ENCODE measurements at regions of chr13 and their contacts with region 1.

Region 1: DNA sequence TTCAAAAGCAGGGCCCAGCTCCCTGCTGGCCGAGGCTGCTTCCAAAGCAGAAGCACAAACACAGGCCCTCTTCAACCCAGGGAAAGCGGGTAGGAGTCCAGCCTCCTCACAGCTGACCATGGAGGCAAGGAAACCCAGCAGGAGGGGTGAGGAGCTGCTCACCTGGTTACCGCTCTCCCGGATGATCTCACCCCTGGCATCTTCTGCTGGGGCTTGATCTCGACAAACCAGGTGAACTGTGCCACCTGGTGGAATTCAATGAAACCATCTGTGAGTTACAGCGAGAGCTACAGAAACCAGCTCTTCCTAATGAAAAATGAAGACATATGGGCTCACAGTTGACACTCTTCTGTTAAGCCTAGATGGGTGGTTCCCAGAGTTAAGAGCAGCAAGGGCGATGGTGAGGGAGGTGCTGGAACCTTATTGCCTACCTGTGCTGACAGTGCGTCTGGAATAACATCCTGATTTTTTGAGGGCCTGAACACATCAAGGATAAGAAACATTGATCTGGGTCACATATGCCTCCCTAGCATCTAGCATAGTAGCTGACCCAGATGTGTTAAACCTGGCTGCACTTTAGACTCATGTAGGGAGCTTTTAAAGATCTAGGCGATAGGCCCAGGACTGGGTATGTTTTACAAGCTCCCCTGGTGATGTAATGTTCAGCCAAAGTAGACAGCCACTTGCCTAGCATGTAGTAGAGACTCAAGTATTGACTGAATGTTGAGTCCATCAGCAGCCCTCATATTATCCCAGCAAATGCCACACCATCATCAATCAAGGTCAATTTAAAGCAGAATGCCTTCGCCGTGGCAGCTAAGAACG is 6.1 kb downstream of the DHRS12 start:
- DNase-seq: peak; percentile 77
- ATAC-seq: peak; percentile 76
- H3K4me3 Mint-ChIP-seq: no peak overlapping the region
- H3K27ac Mint-ChIP-seq: no peak overlapping the region
- H3K4me1 Mint-ChIP-seq: peaks cover 24% of the 10 kb centered on the region
- H3K27me3 Mint-ChIP-seq: no peaks in the 10 kb centered on the region

Region 2: GRCh38 chr13:51425410-51426042 is 372.4 kb before region 1 on chr13:
- CTCF ChIA-PET with region 1: interaction called, 94 read pairs
- POLR2A ChIA-PET with region 1: no interaction called
- DNase-seq: no peak
- ATAC-seq: no peak
- H3K4me3 Mint-ChIP-seq: no peak overlapping the region
- H3K27ac Mint-ChIP-seq: no peak overlapping the region
- H3K4me1 Mint-ChIP-seq: peaks cover 32% of the 10 kb centered on the region
- H3K27me3 Mint-ChIP-seq: no peaks in the 10 kb centered on the region

Region 3: DNA sequence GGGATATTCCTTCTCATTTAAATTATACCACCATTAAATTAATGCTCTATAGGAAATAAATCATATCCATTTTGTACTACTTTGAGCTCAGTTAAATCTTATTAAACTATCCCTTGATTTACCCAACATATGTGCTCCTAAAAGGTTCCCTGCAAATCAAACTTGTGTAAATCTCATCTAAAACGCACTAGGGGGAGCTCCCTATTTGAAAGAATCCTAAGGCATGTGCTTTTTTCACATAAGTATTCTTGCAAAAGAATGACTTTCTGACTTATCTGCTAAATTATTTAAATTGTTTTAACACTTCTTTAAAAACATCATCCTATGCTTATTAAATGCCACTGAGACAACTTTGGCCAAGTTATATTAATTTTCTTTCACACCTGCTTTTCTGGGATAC is 353.0 kb before region 1 on chr13:
- CTCF ChIA-PET with region 1: interaction called, 26 read pairs
- POLR2A ChIA-PET with region 1: interaction called, 3 read pairs
- DNase-seq: no peak
- ATAC-seq: no peak
- H3K4me3 Mint-ChIP-seq: no peak overlapping the region
- H3K27ac Mint-ChIP-seq: no peak overlapping the region
- H3K4me1 Mint-ChIP-seq: peaks cover 14% of the 10 kb centered on the region
- H3K27me3 Mint-ChIP-seq: no peaks in the 10 kb centered on the region

Region 4: GRCh38 chr13:51583875-51584730 is 213.8 kb before region 1 on chr13 and contains the start of gene WDFY2:
- CTCF ChIA-PET with region 1: interaction called, 15 read pairs
- POLR2A ChIA-PET with region 1: interaction called, 3 read pairs
- DNase-seq: peak; percentile 100
- ATAC-seq: peak; percentile 86
- H3K4me3 Mint-ChIP-seq: peak within 1 kb of the TSS; percentile 88
- H3K27ac Mint-ChIP-seq: peak within 1 kb of the TSS; percentile 96
- H3K4me1 Mint-ChIP-seq: peaks cover 36% of the 10 kb centered on the region
- H3K27me3 Mint-ChIP-seq: peaks cover 4% of the 10 kb centered on the region
- total RNA-seq, gene WDFY2: 11.3 TPM

Region 5: DNA sequence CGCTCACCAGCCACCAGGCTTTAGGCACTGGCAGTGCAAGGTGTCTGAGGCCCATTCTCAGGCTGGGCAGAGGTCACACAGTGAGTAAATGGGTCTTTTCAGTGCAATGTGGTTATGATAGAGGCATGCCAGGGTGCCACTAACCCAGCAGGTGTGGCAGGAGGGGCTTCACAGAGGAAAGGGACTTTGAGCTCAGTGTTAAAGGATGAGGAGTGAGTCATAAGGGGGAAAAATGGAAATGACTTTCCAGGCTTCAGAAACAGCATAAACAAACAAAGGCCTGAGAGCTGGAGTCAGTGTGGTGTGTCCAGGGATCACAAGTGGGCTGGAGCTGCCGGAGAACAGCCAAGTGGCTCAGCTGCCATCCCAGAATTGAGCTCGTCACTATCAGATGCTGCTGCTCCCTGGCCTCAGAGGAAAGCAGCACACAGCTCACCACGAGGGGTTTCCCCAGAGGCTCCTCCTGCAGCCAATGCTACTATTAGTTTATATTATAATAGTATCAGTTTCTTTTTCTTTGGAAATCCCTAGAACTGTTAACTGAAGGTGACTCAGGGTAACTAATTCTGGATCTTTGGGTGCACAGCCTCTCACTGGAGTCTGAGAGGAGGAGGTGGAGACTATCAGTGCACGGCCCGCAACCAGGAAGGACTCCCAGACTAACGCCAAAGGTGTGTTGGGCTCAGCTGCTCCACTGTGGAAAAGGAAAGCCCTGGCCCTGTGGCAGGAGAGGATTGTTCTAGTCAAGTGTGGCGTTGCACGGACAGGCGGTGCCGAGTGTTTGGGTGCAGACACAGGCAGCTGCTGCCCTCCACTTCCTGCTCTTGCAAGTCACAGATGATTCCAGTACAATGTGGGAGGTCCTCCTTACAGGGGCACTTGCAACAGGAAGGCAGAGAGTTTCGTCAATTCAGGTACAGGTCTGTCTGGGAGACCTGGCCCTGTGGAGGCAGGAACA is 33.4 kb before region 1 on chr13:
- CTCF ChIA-PET with region 1: interaction called, 15 read pairs
- POLR2A ChIA-PET with region 1: no interaction called
- DNase-seq: peak; percentile 54
- ATAC-seq: peak; percentile 85
- H3K4me3 Mint-ChIP-seq: peak overlapping the region; percentile 69
- H3K27ac Mint-ChIP-seq: peak overlapping the region; percentile 94
- H3K4me1 Mint-ChIP-seq: peaks cover 21% of the 10 kb centered on the region
- H3K27me3 Mint-ChIP-seq: no peaks in the 10 kb centered on the region

Measured in activated CD8-positive, alpha-beta T cell treated with anti-CD3 and anti-CD28 coated beads, Interleukin-2, amount 10 ng/mL, durations not matched to agents 7 days and 5 days (primary cell).